ENCODE measurements at regions of chr6 and their contacts with region 1.

Region 1: DNA sequence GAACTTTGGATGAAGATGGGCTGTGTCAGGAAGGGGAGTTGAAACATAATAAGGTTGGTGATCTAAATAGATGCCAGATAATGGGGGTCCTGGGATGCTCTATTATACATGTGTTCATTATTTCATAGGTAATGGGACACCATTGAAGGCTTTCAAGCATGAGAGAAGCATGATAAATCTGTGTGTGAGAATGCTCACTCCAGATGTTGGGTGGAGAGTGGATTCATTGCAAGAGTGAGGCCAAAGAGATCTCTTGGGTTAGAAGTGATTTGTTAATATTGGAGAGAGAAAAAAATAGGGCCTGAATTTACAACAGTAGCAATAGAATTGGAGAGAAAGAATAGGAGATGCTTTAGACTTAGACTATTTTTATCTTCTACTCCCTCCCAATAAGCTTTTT is 321.3 kb downstream of the SAMD5 start:
- DNase-seq: no peak
- H3K4me3 ChIP-seq: no peak overlapping the region
- H3K27ac ChIP-seq: no peak overlapping the region
- H3K4me1 ChIP-seq: no peaks in the 10 kb centered on the region
- H3K27me3 ChIP-seq: no peaks in the 10 kb centered on the region
- CTCF ChIP-seq: no peak

Region 2: GRCh38 chr6:147782302-147782701 is 47.5 kb before region 1 on chr6:
- CTCF ChIA-PET with region 1: no interaction called
- POLR2A ChIA-PET with region 1: interaction called, 14 read pairs
- intact Hi-C with region 1: no loop called
- DNase-seq: no peak
- H3K4me3 ChIP-seq: no peak overlapping the region
- H3K27ac ChIP-seq: no peak overlapping the region
- H3K4me1 ChIP-seq: no peaks in the 10 kb centered on the region
- H3K27me3 ChIP-seq: no peaks in the 10 kb centered on the region
- CTCF ChIP-seq: no peak

Region 3: GRCh38 chr6:148016013-148016412 is 186.2 kb after region 1 on chr6:
- CTCF ChIA-PET with region 1: no interaction called
- POLR2A ChIA-PET with region 1: no interaction called
- intact Hi-C with region 1: no loop called
- DNase-seq: no peak
- H3K4me3 ChIP-seq: no peak overlapping the region
- H3K27ac ChIP-seq: no peak overlapping the region
- H3K4me1 ChIP-seq: no peaks in the 10 kb centered on the region
- H3K27me3 ChIP-seq: no peaks in the 10 kb centered on the region
- CTCF ChIP-seq: no peak

Measured in PC-9 (cell line).